Body of pancreas (tissue), 4 donors: ENCODE measurements at regions of chr2 and their contacts with region 1.

Region 1: DNA sequence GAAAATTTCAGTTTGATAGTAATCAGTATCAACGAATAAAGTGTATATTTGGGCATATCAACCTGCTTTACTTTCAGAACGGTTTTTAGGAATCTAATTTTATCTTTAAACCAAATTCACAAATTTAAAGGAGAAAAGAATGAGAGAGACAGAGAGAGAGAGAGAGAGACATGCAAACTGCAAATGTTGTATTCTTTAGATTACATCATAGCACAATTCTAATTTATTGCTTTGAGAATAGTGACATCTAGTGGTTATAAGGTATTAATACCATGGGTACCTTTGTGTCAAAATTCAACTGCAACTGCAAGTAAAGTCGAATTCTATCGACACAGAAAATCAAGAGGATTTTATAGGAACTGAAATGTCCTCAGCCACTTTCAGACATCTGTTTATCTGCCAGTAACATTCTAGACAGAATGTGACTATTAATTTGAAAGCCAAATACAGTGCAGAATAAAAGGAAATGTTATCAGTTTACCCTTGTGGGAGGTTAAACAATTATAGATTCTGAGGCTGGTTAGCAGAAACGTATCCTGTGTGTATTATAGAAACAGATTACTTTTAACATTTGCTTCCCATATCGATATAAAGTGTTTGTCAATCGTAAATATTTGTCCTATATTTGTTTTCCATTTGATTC is 529.8 kb upstream of the VRK2 start:
- DNase-seq: no peak
- ATAC-seq: peak; percentile 79
- H3K4me3 ChIP-seq: no peak overlapping the region
- H3K27ac ChIP-seq: no peak overlapping the region
- H3K4me1 ChIP-seq: no peaks in the 10 kb centered on the region
- H3K27me3 ChIP-seq: no peaks in the 10 kb centered on the region
- CTCF ChIP-seq: peak; percentile 25 to 71 (median 65)
- POLR2A ChIP-seq: no peak

Region 2: DNA sequence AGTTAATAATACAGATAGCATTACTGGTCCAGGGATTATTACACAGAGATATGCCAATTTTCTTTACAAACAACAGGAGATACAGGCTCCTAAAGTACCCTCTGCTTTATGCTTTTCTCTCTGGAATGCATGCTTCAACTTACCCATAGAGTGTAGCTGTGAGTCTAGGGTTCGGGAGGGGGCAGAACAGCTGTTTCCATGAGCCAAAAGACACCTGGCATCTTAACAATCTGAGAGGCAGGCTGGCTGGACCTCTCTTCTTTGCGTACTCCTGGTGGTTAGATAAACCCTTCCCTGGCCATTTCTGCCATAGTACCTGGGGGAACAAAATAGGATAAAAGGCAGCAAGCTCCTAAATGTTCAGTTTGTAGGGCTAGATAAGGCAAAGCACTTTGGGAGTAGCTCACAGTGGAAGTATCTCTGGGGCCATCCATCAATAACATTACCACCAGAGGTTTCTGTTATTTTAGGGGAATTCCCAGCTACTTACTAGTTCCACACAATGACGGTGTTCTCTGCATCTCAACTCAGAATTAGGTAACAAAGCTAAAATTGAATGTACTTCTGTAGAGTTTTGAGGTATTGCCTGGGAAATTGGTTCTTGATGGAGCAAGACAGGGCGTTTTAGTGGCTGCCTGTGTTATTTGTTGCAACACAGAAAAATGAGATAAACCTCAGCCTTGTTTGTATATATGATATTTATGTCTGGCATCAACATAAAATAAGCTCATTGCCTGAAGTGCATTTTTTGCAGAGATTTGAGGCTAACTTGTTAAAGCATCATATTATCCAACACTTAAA is 1339.2 kb before region 1 on chr2:
- intact Hi-C with region 1: loop called (anchors 5 kb)
- DNase-seq: no peak
- ATAC-seq: no peak
- H3K4me3 ChIP-seq: no peak overlapping the region
- H3K27ac ChIP-seq: no peak overlapping the region
- H3K4me1 ChIP-seq: no peaks in the 10 kb centered on the region
- H3K27me3 ChIP-seq: no peaks in the 10 kb centered on the region
- CTCF ChIP-seq: no peak
- POLR2A ChIP-seq: no peak